ENCODE measurements at regions of chr3 and their contacts with region 1.

Region 1: DNA sequence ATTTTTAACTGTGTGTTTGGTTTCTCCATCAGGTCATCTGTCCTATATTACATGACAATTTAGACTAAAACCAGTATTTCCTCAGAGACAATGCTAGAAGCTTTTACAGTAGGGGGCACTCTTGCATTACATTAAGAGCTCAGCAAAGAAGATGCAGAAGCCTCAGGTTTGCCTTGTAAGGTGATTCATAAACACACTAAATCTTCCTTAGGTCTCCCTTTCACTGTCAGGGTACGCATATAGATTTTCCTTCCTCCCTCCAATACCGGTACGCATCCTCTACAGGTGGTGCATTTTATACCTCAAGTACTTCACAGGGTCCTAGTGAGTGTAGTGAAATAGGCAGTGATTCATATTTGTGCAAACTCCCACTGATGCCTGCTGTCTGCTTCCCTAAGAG is 46.5 kb downstream of the CD86 start:
- DNase-seq: no peak
- CTCF ChIP-seq: peak; percentile 73

Region 2: DNA sequence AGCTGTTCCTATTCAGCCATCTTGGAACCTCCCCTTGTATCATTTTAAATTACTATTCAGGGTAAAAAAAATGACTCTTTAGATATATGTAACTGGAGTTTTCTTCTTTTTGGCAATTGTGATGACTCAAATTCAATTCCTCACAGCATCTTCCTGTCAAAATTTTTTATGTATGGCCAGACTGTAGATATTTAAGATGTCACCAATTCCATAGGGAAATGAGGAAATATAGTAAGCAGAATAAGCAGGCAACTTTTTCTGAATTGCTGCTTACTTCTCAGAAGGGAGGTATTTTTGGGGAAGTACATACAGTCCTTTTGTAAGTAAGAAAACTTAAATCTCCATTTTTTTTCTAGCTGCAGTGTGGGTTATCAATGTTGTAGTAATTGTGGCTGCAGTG is 237.8 kb before region 1 on chr3:
- CTCF ChIA-PET with region 1: no interaction called
- POLR2A ChIA-PET with region 1: no interaction called
- DNase-seq: no peak
- CTCF ChIP-seq: no peak

Region 3: GRCh38 chr3:122067214-122067550 is 34.5 kb before region 1 on chr3:
- CTCF ChIA-PET with region 1: interaction called, 16 read pairs
- POLR2A ChIA-PET with region 1: no interaction called
- DNase-seq: no peak
- CTCF ChIP-seq: no peak

Region 4: DNA sequence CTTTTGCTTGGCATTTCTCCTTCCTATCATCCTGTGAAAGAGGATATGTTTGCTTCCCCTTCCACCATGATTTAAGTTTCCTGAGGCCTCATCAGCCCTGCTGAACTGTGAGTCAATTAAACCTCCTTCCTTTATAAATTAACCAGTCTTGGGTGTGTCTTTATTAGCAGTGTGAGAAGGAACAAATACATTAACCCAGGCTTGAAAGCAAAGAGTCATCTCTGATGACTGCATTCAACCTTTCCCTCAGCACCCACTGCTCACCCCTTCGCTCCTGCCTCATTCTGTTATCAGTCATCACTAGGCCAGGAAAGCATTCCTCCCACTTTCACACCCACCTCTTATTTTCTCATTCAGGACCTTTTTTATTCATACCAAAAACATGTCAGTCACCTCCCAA is 22.2 kb after region 1 on chr3:
- CTCF ChIA-PET with region 1: interaction called, 21 read pairs
- POLR2A ChIA-PET with region 1: no interaction called
- DNase-seq: no peak
- CTCF ChIP-seq: no peak

Region 5: DNA sequence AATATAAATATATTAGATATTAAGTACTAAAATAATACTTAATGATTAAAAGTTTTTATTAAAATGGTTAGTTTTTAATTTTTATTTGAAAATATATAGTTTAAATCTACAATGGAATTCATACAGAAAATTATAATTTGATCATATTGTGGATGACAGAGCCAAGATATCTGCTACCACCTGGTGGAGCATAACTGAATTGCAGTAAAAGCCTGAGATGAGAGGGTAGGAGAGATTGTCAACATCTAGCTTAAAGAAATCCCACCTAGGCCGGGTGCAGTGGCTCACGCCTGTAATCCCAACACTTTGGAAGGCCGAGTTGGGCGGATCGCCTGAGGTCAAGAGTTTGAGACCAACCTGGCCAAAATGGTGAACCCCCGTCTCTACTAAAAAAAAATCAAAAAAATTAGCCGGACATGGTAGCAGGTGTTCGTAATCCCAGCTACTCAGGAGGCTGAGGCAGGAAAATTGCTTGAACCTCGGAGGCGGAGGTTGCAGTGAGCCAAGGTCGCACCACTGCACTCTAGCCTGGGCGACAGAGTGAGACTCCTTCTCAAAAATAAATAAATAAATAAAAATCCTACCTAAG is 198.3 kb after region 1 on chr3:
- CTCF ChIA-PET with region 1: interaction called, 34 read pairs
- POLR2A ChIA-PET with region 1: no interaction called
- DNase-seq: no peak
- CTCF ChIP-seq: peak; percentile 56

Region 6: DNA sequence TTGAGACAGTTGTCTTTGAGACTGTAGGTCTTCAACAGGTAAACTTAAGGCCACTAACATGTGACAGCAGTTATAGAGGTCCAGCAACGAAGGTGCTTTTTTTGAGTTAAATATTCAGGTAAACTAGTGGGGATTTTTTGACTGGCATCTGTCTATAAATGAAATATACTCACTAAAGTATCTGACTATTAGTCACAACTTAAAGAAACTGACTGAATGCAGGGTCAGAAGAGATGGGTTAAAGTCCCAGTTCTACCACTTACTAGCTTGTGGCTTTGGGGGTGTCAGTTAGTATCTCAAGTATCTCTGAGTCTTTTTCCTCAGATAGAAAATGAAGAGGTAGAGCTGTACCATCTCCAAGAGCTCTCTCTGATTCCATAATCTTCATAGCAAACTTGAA is 263.4 kb after region 1 on chr3:
- CTCF ChIA-PET with region 1: interaction called, 19 read pairs
- POLR2A ChIA-PET with region 1: no interaction called
- DNase-seq: no peak
- CTCF ChIP-seq: no peak

Region 7: GRCh38 chr3:122415720-122416654 is 314.3 kb after region 1 on chr3 and contains the start of gene WDR5B:
- CTCF ChIA-PET with region 1: interaction called, 11 read pairs
- POLR2A ChIA-PET with region 1: interaction called, 5 read pairs
- DNase-seq: peak; percentile 97
- CTCF ChIP-seq: no peak

Measured in GM10248 (cell line).